Transverse colon (tissue), 4 donors: ENCODE measurements at regions of chr18 and their contacts with region 1.

Region 1: DNA sequence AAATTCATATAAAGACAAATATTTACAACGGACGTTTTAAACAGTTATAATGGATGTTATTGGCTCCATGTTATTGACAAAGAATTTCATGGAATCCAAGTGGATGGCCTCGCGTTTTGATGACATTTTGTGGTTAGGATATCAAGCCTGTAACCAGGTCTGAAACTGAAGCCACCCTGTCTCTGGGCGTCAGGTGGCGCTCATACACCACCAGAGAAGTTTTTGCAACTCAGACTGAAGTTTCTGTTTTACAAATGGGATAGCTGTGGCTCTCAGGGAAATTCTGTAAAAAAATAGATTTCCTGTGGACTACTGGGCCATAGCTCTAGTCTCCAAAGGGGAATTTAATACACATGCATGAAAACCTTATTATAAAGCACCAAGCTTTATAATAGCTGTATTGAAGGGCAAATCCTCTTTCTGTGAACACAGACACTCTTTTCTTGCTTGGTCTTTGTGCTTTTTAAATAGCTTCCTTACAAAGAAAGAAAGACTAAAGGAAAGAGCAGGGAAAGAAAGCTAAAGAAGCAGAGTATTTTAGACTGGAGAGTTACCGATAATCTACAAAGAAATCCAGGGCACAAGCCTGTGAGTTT is 86.7 kb downstream of the C18orf54 start:
- DNase-seq: peak; percentile 78
- H3K4me3 ChIP-seq: no peak overlapping the region
- H3K27ac ChIP-seq: no peak overlapping the region
- H3K4me1 ChIP-seq: peaks cover 0 to 4% (median 0%) of the 10 kb centered on the region in 4 donors
- H3K27me3 ChIP-seq: no peaks in the 10 kb centered on the region
- CTCF ChIP-seq: peak; percentile 55 to 81 (median 69)
- EP300 ChIP-seq: no peak
- POLR2A ChIP-seq: no peak

Region 2: DNA sequence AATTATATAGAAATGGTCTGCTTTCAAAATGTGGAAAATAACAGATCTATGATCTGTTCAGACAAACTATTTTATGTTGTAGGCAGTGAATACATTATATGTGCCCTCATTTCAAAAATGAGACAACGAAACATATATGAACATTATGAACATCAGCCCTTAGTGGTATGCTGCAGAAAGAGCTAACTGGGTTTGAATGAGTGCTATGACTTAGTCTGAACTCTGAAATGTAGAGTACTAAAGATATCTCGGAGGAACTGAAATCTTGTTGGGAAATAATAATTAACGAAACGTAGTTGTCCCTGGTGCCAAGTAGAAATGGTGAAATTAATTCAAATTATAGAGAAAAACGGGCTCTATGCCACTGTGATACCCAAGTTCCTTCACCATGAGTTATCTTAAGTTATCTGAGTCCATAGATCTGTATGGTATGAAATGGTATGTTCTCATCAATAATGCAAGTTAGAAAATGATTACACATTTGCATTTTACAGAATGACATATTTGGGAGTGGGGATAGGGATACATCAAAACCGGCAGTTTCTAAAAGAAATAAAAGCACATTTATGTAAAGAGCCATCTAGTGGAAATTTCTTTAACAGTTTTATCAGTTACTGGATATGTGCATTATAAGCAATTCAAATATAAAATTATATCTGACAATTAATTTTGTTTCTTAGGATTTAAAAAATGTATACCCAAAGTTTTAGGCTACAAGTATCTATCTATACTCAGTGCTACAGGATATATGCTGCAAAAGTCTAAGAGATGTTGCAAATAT is 113.5 kb before region 1 on chr18:
- in situ Hi-C with region 1: loop called in 1 of 4 experiments (anchors 25 kb)
- intact Hi-C with region 1: no loop called
- DNase-seq: no peak
- H3K4me3 ChIP-seq: no peak overlapping the region
- H3K27ac ChIP-seq: no peak overlapping the region
- H3K4me1 ChIP-seq: no peaks in the 10 kb centered on the region
- H3K27me3 ChIP-seq: no peaks in the 10 kb centered on the region
- CTCF ChIP-seq: peak in 1 of 5 experiments; percentile 3
- EP300 ChIP-seq: no peak
- POLR2A ChIP-seq: no peak

Region 3: GRCh38 chr18:54479365-54479764 is 34.9 kb after region 1 on chr18:
- in situ Hi-C with region 1: no loop called
- intact Hi-C with region 1: no loop called
- DNase-seq: no peak
- H3K4me3 ChIP-seq: no peak overlapping the region
- H3K27ac ChIP-seq: no peak overlapping the region
- H3K4me1 ChIP-seq: no peaks in the 10 kb centered on the region
- H3K27me3 ChIP-seq: peaks cover 4% of the 10 kb centered on the region
- CTCF ChIP-seq: no peak
- EP300 ChIP-seq: no peak
- POLR2A ChIP-seq: no peak